Panc1 (cell line): ENCODE measurements at regions of chr11 and their contacts with region 1.

Region 1: DNA sequence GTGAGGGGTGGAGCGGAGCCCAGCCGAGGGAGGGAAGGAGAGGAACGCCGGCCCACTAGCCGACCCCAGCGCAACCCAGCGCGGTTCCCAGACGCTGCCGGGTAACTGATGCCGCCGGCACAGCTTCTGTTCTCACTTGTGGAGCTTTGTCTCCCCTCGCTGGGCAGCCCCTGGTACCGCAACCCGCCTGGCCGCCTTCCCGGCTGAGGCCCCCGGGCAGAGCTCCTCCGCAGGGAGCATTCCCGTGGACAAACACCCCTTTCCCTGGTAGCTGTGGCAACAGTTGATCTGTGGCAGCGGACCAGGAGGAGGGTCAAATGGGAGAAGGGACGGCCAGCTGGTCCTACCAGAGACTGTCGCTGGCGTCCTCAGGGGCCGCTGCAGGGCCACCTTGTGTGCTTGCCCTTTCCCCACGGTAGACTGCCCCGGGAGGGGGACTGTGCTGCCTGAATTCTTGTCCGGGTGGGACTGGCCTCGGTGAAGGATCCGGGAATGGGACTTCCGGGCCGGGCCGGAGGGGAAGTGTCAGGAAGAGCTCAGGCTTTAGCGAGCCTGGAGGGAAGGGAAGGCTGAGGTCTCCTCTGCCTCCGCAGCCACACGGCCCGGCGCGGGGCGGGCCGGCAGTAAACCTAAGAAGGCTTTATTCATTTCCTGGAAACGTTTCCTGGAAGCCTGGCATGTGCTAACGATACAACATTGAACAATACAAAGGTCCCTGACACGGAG is 468.0 kb downstream of the OPCML start:
- DNase-seq: no peak
- ATAC-seq: peak; percentile 90
- H3K4me3 ChIP-seq: peak overlapping the region; percentile 29 to 55
- H3K27ac ChIP-seq: no peak overlapping the region
- H3K4me1 ChIP-seq: no peaks in the 10 kb centered on the region
- H3K27me3 ChIP-seq: peaks cover 8% of the 10 kb centered on the region
- CTCF ChIP-seq: peak; percentile 80

Region 2: DNA sequence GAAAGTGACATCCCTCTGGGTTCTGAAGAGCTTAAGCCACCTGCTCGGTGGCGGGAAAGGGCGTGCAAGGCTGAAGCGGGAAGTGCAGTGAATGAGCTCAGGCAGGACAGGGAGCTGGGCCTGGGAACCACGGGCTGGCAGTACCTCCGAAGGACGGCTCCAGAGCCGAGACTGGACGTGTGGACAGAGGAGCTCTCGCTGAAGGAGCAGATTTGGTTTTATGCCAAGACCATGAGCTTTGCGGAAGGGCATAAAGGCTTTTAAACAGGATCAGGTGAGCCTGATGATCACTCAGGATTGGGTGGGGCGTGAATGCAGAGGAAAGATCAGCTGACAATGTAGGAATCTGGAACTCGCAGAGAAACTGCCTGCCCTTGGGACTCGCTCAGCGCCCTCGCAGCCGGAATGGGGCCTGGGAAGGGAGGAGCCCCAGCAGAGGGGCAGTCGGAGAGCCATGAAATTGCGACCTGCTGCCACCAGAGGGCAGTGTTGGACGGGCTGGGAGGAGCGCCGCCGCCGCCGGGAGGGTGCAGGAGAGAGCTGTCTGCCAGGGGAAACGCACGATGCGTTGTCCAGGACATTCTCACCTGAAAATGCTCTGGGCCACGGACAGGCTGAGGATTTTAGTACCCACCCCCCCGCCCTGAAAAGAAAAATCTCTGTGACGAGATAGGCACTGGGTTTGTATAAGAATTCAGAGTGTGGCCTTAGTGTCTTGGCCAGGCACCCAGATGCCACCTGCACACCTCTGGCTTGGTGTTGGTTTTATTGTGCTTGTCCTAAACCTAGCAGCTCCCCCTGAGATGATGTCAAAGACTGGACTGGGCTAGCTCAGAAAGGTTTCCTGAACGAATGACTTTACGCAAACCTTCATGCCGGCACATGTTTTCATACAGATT is 1369.5 kb before region 1 on chr11:
- CTCF ChIA-PET with region 1: interaction called, 5 read pairs
- POLR2A ChIA-PET with region 1: no interaction called
- in situ Hi-C with region 1: no loop called
- intact Hi-C with region 1: loop called (anchors 5 kb)
- DNase-seq: peak; percentile 22
- ATAC-seq: peak; percentile 90
- H3K4me3 ChIP-seq: no peak overlapping the region
- H3K27ac ChIP-seq: no peak overlapping the region
- H3K4me1 ChIP-seq: no peaks in the 10 kb centered on the region
- H3K27me3 ChIP-seq: peaks cover 7% of the 10 kb centered on the region; the same call in 1 of the 2 replicates
- CTCF ChIP-seq: peak; percentile 97

Region 3: DNA sequence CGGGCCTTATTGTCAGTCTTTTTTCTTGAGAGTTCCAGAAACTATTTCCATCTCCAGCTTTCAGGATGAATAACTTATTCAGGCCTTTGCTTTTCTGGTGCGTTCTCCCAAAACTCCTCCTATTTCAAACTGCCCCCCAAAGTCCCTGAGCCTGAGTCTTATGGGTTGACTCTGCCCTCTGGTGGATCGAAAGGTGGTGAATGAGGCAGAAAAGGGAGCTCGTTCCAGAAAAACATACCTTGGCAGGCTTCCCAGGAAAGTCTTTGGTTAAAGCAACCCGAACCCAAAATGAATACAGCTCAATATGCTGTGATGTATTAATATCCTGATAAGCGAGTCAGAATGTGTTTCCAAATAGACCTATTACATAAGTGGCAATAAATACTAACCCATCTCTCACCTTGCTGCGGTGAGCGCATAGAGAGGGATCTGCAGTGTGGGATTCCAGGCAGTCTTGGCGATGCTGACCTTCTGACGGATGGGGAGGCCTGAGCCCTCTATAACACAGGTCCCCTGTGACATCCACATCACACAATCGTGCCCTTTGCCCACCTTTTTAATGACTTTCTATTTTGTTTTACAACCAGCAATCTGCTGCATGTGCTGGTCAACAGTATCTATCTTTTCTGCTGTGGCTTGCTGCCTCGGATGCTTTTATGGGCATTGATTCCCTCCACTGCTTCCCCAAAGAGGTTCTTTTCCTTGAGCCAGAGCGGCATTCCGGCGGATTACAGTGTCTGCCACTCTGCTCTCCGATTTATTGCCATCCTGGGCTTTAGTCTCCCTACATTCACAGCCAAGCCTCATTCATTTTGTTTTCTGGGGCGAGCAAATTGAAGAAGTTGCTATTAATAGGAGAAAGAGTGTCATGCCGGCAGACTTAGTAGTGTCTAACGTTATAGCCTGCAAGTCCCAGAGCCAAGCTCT is 937.1 kb before region 1 on chr11:
- CTCF ChIA-PET with region 1: no interaction called
- POLR2A ChIA-PET with region 1: no interaction called
- in situ Hi-C with region 1: no loop called
- intact Hi-C with region 1: loop called (anchors 10 kb)
- DNase-seq: peak; percentile 2
- ATAC-seq: no peak
- H3K4me3 ChIP-seq: peak overlapping the region in 1 of 2 experiments; percentile 25; a peak in 2 of 4 replicates
- H3K27ac ChIP-seq: no peak overlapping the region
- H3K4me1 ChIP-seq: no peaks in the 10 kb centered on the region
- H3K27me3 ChIP-seq: no peaks in the 10 kb centered on the region
- CTCF ChIP-seq: peak; percentile 65